OCI-LY7 (cell line): ENCODE measurements at regions of chr10 and their contacts with region 1.

Region 1: DNA sequence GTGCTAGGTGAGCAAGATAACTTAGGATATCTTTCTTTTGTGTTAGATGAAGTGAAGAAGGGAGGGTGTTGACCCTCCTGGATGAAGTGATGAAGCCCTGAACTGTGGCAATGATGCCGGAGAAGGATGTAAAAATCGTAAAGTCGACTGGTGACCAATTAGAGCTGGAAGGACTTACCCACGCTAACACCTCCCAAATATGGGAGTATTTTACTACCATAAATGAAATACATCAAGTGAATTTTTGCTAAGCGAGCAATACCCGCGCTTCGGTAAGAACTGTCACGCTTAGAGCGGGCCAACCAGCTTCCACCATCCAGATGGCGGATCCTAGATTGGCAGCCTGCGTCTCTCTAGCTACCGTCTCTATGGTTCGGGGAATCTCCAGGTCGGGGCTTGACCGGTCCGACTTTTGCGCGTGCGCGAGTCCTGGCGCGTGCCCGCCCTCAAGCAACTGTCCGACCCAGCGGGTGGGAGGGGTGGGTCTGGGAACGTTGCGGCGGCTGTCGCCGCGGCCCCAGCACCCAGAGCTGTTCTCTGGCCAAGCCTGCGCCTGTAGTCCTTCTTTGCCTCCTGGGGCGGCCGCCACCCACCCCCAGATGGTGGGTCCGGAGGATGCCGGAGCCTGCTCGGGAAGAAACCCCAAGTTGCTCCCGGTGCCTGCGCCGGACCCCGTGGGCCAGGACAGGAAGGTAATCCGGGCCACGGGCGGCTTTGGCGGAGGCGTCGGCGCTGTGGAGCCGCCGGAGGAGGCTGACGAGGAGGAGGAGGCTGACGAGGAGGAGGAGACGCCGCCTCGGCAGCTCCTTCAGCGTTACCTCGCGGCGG is at the start of gene TBC1D12:
- DNase-seq: peak; percentile 79
- H3K4me3 ChIP-seq: peak within 1 kb of the TSS; percentile 81
- H3K27ac ChIP-seq: peak within 1 kb of the TSS; percentile 43
- H3K4me1 ChIP-seq: no peaks in the 10 kb centered on the region
- CTCF ChIP-seq: no peak
- total RNA-seq, gene TBC1D12: 3.9 and 5.0 TPM in 2 replicates

Region 2: GRCh38 chr10:93272884-93273675 is 1129.1 kb before region 1 on chr10:
- CTCF ChIA-PET with region 1: no interaction called
- POLR2A ChIA-PET with region 1: no interaction called
- intact Hi-C with region 1: loop called (anchors 10 kb)
- DNase-seq: no peak
- H3K4me3 ChIP-seq: no peak overlapping the region
- H3K27ac ChIP-seq: no peak overlapping the region
- H3K4me1 ChIP-seq: no peaks in the 10 kb centered on the region
- CTCF ChIP-seq: no peak

Region 3: GRCh38 chr10:94362360-94363250 is 39.6 kb before region 1 on chr10 and contains the start of gene NOC3L:
- CTCF ChIA-PET with region 1: no interaction called
- POLR2A ChIA-PET with region 1: interaction called, 8 read pairs
- intact Hi-C with region 1: loop called (anchors 2 kb)
- DNase-seq: peak; percentile 96
- H3K4me3 ChIP-seq: peak within 1 kb of the TSS; percentile 98
- H3K27ac ChIP-seq: peak within 1 kb of the TSS; percentile 47
- H3K4me1 ChIP-seq: peaks cover 17% of the 10 kb centered on the region
- CTCF ChIP-seq: peak; percentile 78
- total RNA-seq, gene NOC3L: 31.6 and 38.5 TPM in 2 replicates

Region 4: DNA sequence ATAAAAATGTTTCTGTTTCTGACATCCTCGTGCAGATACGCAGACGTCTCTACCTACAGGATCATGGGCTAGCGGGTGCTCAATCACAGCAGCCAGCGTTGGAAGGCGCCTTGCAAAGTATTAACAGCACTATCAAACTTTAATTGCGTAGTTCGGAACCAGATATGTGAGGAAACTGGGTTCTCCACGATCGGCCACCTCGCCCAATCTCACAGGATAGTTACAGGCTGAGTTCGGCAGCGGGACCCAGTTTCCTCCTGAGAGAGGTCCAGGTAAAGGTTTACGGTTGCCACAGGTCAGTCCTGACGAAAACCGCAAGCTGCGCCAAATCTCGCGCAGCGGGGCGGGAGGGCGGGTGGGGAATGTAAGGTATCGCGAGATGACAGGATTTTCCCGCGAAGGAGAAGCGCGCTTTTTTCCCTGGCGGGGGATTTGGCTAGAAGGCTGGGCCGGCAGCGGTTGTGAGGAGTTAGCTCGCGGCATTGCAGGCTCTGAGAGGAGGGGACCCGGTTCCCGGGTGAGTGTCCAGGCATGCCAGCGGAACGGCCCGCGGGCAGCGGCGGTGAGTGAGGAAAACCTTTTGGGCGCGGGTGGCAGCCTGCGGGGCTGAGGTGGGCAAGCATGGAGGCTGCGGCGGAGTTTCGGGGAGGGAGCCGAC is 143.3 kb after region 1 on chr10 and contains the start of gene HELLS:
- CTCF ChIA-PET with region 1: no interaction called
- POLR2A ChIA-PET with region 1: no interaction called
- intact Hi-C with region 1: loop called (anchors 5 kb)
- DNase-seq: peak; percentile 93
- H3K4me3 ChIP-seq: peak within 1 kb of the TSS; percentile 91
- H3K27ac ChIP-seq: peak within 1 kb of the TSS; percentile 59
- H3K4me1 ChIP-seq: peaks cover 14% of the 10 kb centered on the region
- CTCF ChIP-seq: no peak
- total RNA-seq, gene HELLS: 204 and 233 TPM in 2 replicates